ENCODE measurements at regions of chr18 and their contacts with region 1.

Region 1: GRCh38 chr18:74652392-74652988 is 54.8 kb downstream of the ZNF407 start:
- DNase-seq: no peak
- ATAC-seq: no peak
- H3K4me3 ChIP-seq: no peak overlapping the region
- H3K27ac ChIP-seq: no peak overlapping the region
- H3K4me1 ChIP-seq: no peaks in the 10 kb centered on the region
- H3K27me3 ChIP-seq: no peaks in the 10 kb centered on the region
- CTCF ChIP-seq: peak; percentile 48 to 72 (median 61)
- POLR2A ChIP-seq: no peak

Region 2: DNA sequence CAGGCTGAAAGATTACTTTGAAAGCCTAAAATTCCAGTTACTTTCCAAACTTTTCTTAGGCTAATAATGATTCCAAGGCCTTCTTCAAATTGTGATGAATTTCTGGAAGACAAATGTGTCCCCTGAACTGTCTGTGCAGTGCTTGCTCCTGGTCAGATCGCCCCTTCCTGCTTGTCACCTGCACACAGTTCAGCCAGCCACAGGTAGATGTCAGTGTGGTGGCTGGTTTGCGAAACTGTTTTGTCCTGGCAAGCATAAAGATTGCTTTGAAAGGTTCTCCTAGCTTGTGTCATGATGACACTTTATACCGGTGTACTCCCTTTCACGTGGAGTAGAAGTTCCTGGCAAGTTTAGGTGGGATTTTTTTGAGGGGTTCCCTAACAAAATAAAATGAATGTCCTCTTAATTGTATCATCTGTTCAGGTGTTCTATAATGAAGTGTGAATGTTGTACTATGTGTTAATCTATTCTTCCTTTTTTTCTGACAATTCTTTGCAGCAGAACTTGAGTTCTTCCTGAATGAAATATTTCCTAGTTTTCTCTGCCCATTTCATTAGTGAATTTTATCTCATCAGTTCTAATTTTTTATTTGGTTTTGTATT is 244.0 kb after region 1 on chr18:
- intact Hi-C with region 1: loop called in 3 of 10 experiments (anchors 10 kb)
- DNase-seq: peak in 4 of 5 donors; percentile 20 to 37 (median 26)
- ATAC-seq: peak; percentile 78 to 82 (median 80)
- H3K4me3 ChIP-seq: no peak overlapping the region
- H3K27ac ChIP-seq: no peak overlapping the region
- H3K4me1 ChIP-seq: peaks cover 0 to 20% (median 0%) of the 10 kb centered on the region in 12 donors
- H3K27me3 ChIP-seq: no peaks in the 10 kb centered on the region
- CTCF ChIP-seq: peak; percentile 31 to 56 (median 48)
- POLR2A ChIP-seq: no peak

Region 3: GRCh38 chr18:75052475-75052874 is 400.0 kb after region 1 on chr18:
- intact Hi-C with region 1: loop called in 1 of 10 experiments (anchors 10 kb)
- DNase-seq: peak in 2 of 5 donors; percentile 49 to 56
- ATAC-seq: peak; percentile 48 to 69 (median 62)
- H3K4me3 ChIP-seq: no peak overlapping the region
- H3K27ac ChIP-seq: peak overlapping the region in 11 of 12 donors; percentile 41 to 75 (median 60)
- H3K4me1 ChIP-seq: peaks cover 0 to 47% (median 7%) of the 10 kb centered on the region in 12 donors
- H3K27me3 ChIP-seq: no peaks in the 10 kb centered on the region
- CTCF ChIP-seq: no peak
- POLR2A ChIP-seq: no peak

Region 4: GRCh38 chr18:75478996-75479880 is 826.7 kb after region 1 on chr18:
- intact Hi-C with region 1: loop called (anchors 1 to 5 kb)
- DNase-seq: no peak
- ATAC-seq: peak in 3 of 4 donors; percentile 79 to 86 (median 84)
- H3K4me3 ChIP-seq: no peak overlapping the region
- H3K27ac ChIP-seq: no peak overlapping the region
- H3K4me1 ChIP-seq: no peaks in the 10 kb centered on the region
- H3K27me3 ChIP-seq: no peaks in the 10 kb centered on the region
- CTCF ChIP-seq: peak; percentile 60 to 84 (median 70)
- POLR2A ChIP-seq: no peak

Region 5: GRCh38 chr18:76252880-76253279 is 1600.4 kb after region 1 on chr18:
- intact Hi-C with region 1: loop called in 1 of 10 experiments (anchors 10 kb)
- DNase-seq: no peak
- ATAC-seq: no peak
- H3K4me3 ChIP-seq: no peak overlapping the region
- H3K27ac ChIP-seq: no peak overlapping the region
- H3K4me1 ChIP-seq: peaks cover 0 to 7% (median 0%) of the 10 kb centered on the region in 12 donors
- H3K27me3 ChIP-seq: peaks cover 0 to 16% (median 0%) of the 10 kb centered on the region in 9 donors
- CTCF ChIP-seq: peak in 5 of 12 donors; percentile 26 to 53 (median 46)
- POLR2A ChIP-seq: no peak

Measured in heart left ventricle (tissue), 16 donors.